Dorsolateral prefrontal cortex (tissue), 120 donors: ENCODE measurements at regions of chr21 and their contacts with region 1.

Region 1: GRCh38 chr21:20811702-20812101 is 186.5 kb upstream of the NCAM2 start:
- DNase-seq: no peak
- H3K4me3 ChIP-seq: no peak overlapping the region
- H3K27ac ChIP-seq: peak overlapping the region in 10 of 59 donors; percentile 1 to 58 (median 8)
- H3K27me3 ChIP-seq: no peaks in the 10 kb centered on the region
- CTCF ChIP-seq: peak in 21 of 56 donors; percentile 7 to 55 (median 24)

Region 2: GRCh38 chr21:20875742-20876141 is 64.0 kb after region 1 on chr21:
- intact Hi-C with region 1: loop called (anchors 10 kb)
- DNase-seq: no peak
- H3K4me3 ChIP-seq: no peak overlapping the region
- H3K27ac ChIP-seq: no peak overlapping the region
- H3K27me3 ChIP-seq: no peaks in the 10 kb centered on the region
- CTCF ChIP-seq: peak in 32 of 56 donors; percentile 11 to 55 (median 26)